Naive thymus-derived CD4-positive, alpha-beta T cell (primary cell): ENCODE measurements at regions of chr3 and their contacts with region 1.

Region 1: DNA sequence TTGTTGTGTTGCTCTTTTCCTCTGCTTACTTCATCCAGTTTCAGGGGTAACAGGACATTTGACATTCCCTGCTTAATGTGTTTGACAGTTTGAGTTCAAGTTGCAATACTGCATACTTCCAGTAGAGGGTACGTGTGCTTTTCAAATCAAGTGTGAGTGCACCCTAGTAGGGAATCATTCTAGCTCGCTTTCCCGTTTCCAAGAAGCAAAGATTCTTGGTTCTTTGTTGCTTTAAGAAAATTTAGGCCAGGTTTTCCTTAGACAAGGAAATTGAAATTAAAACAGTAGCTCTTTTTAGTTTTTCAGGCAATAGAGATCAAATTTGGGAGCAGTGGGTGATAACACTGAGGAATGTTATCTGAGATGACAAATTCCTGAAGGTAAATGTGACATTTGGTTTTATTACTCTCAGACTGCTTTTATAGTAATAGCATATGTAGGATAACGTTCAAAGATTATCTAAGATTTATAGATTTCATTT is 73.2 kb downstream of the SYNPR start:
- DNase-seq: peak in 2 of 9 donors; percentile 2 to 8
- ATAC-seq: peak; percentile 63
- H3K4me3 ChIP-seq: no peak overlapping the region
- H3K4me3 Mint-ChIP-seq: no peak overlapping the region
- H3K27ac ChIP-seq: no peak overlapping the region
- H3K27ac Mint-ChIP-seq: no peak overlapping the region
- H3K4me1 ChIP-seq: no peaks in the 10 kb centered on the region
- H3K4me1 Mint-ChIP-seq: peaks cover 0 to 2% (median 0%) of the 10 kb centered on the region in 7 donors
- H3K27me3 ChIP-seq: no peaks in the 10 kb centered on the region
- H3K27me3 Mint-ChIP-seq: peaks cover 12 to 47% (median 40%) of the 10 kb centered on the region in 5 donors

Region 2: DNA sequence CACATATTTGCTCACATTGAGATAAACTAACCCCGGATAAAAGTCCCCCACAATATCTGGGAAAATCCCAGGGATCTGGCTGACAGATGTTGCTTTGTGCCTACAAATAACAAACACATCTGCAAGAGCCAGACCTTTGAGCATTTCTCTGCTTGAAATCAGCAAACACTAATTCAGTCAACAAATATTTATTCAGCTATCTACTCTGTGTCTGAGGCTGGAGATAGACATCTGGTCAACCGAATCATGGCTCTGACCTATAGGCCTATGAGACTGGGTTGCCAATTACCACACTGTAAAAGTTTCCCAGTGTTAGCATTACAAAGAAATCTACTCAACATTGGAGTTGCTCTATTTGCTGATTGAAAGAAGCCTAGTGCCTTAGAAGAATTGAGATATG is 274.9 kb before region 1 on chr3:
- CTCF ChIA-PET with region 1: no interaction called
- POLR2A ChIA-PET with region 1: no interaction called
- intact Hi-C with region 1: no loop called
- DNase-seq: no peak
- ATAC-seq: no peak
- H3K4me3 ChIP-seq: no peak overlapping the region
- H3K4me3 Mint-ChIP-seq: no peak overlapping the region
- H3K27ac ChIP-seq: no peak overlapping the region
- H3K27ac Mint-ChIP-seq: no peak overlapping the region
- H3K4me1 ChIP-seq: no peaks in the 10 kb centered on the region
- H3K4me1 Mint-ChIP-seq: no peaks in the 10 kb centered on the region
- H3K27me3 ChIP-seq: no peaks in the 10 kb centered on the region
- H3K27me3 Mint-ChIP-seq: no peaks in the 10 kb centered on the region

Region 3: DNA sequence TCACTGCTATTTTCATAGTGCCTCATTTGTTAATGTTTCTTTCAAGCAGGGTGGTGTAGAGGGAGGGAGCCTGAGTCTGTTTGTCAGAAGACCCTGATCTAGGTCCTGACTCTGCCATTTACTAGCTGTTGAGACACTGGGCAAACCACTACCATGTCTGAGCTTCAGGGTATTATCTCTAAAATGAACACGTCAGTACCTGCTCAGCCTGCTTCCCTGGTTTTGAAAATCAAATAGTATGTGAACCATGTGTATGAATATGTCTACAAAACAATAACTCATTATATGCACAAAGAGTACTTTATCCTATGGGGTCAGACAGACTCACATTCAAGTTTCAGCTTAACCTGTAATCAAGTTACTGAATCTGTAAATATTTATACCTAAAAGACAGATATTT is 48.0 kb before region 1 on chr3:
- CTCF ChIA-PET with region 1: no interaction called
- POLR2A ChIA-PET with region 1: no interaction called
- intact Hi-C with region 1: no loop called
- DNase-seq: no peak
- ATAC-seq: no peak
- H3K4me3 ChIP-seq: no peak overlapping the region
- H3K4me3 Mint-ChIP-seq: no peak overlapping the region
- H3K27ac ChIP-seq: no peak overlapping the region
- H3K27ac Mint-ChIP-seq: no peak overlapping the region
- H3K4me1 ChIP-seq: no peaks in the 10 kb centered on the region
- H3K4me1 Mint-ChIP-seq: peaks cover 0 to 1% (median 0%) of the 10 kb centered on the region in 7 donors
- H3K27me3 ChIP-seq: no peaks in the 10 kb centered on the region
- H3K27me3 Mint-ChIP-seq: no peaks in the 10 kb centered on the region

Region 4: DNA sequence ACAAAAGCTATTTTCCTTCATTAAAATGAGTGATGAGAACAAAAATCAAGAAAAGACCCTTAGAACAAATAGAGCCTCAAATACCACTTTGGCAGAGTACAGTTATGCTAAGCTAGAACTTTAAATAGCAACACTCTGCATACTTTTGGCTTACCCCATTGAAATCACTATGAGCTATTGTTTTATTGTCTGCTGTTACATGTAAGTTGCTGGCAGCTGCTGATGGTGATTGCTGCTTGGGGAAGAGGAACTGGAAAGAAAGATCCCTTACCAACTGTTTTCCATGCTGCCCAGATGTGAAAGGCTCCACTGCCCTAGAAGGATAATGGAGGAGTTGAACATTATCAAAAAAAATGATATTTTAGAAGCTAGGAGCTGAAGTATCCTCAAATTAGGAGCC is 62.2 kb after region 1 on chr3:
- CTCF ChIA-PET with region 1: no interaction called
- POLR2A ChIA-PET with region 1: no interaction called
- intact Hi-C with region 1: no loop called
- DNase-seq: no peak
- ATAC-seq: no peak
- H3K4me3 ChIP-seq: no peak overlapping the region
- H3K4me3 Mint-ChIP-seq: no peak overlapping the region
- H3K27ac ChIP-seq: no peak overlapping the region
- H3K27ac Mint-ChIP-seq: no peak overlapping the region
- H3K4me1 ChIP-seq: no peaks in the 10 kb centered on the region
- H3K4me1 Mint-ChIP-seq: no peaks in the 10 kb centered on the region
- H3K27me3 ChIP-seq: no peaks in the 10 kb centered on the region
- H3K27me3 Mint-ChIP-seq: no peaks in the 10 kb centered on the region

Region 5: DNA sequence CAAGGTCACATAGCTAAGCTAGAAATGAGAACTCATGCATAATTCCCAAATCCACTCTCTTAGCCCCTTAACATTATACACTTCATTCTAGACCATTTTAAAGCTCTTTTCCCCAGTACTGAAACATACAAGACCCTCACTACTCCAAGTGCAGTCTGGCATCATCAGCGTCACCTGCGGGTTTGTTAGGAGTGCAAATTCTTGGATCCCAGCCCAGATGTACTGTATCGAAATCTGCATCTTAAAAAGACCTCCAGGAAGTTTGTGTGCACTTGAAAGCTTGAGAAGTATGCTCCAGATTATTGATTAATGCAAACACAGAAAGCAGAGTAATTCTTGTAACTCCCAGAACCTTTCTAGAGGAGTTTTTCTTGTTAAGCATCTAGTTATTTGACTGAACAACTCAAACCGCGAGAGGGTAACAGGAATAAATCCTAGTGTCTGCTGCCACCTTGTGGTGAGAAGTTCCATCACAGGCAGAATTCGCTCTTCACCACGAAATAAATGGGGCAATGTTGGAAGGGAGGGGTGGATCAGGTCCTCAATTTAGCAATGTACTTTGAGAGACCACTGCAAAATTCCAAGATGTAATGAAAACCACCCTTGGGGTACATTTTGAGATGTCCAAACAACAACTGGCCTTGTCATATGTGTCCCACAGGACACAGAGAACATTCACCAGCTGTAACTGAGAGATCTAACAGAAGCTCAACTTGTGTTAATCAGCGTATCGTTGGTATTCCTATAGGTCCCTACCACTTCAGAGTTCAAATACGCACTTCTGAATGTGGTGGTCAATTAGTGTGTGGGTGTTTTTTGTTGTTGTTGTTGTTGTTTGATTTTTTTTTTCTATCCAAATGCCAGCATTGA is 467.2 kb after region 1 on chr3:
- CTCF ChIA-PET with region 1: no interaction called
- POLR2A ChIA-PET with region 1: no interaction called
- intact Hi-C with region 1: loop called in 1 of 2 experiments (anchors 1 kb)
- DNase-seq: peak; percentile 15 to 69 (median 50)
- ATAC-seq: peak; percentile 80
- H3K4me3 ChIP-seq: no peak overlapping the region
- H3K4me3 Mint-ChIP-seq: no peak overlapping the region
- H3K27ac ChIP-seq: no peak overlapping the region
- H3K27ac Mint-ChIP-seq: no peak overlapping the region
- H3K4me1 ChIP-seq: no peaks in the 10 kb centered on the region
- H3K4me1 Mint-ChIP-seq: peaks cover 0 to 5% (median 0%) of the 10 kb centered on the region in 7 donors
- H3K27me3 ChIP-seq: no peaks in the 10 kb centered on the region
- H3K27me3 Mint-ChIP-seq: no peaks in the 10 kb centered on the region